ENCODE measurements at regions of chr6 and their contacts with region 1.

Region 1: GRCh38 chr6:15615802-15616201 is 47.0 kb downstream of the DTNBP1 start:
- DNase-seq: no peak
- H3K4me3 ChIP-seq: no peak overlapping the region
- H3K27ac ChIP-seq: no peak overlapping the region
- H3K4me1 ChIP-seq: peaks cover 0 to 19% (median 0%) of the 10 kb centered on the region in 3 donors
- H3K27me3 ChIP-seq: no peaks in the 10 kb centered on the region
- CTCF ChIP-seq: no peak
- POLR2A ChIP-seq: no peak

Region 2: GRCh38 chr6:15512126-15512525 is 103.7 kb before region 1 on chr6:
- intact Hi-C with region 1: loop called (anchors 10 kb)
- DNase-seq: no peak
- H3K4me3 ChIP-seq: no peak overlapping the region
- H3K27ac ChIP-seq: no peak overlapping the region
- H3K4me1 ChIP-seq: no peaks in the 10 kb centered on the region
- H3K27me3 ChIP-seq: no peaks in the 10 kb centered on the region
- CTCF ChIP-seq: no peak
- POLR2A ChIP-seq: no peak

Region 3: DNA sequence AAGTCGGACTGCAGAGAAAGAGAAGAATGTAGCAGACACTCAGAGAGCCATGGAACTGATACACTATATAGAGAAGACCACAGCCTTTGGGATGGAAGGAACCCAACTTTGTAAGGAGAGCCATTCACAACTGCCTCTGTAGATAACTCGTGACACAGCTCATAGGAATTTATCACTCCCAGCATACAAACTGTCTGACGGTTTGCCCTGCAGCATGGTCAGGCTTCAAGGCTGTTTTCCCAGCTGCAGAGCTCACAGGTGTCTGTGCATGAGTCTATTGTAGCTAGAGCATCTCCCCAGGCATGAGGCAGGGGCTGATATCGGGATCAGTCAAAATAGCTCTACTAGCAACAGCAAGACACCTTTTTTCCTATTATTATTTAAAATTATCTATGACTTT is 177.5 kb after region 1 on chr6:
- intact Hi-C with region 1: no loop called
- DNase-seq: no peak
- H3K4me3 ChIP-seq: no peak overlapping the region
- H3K27ac ChIP-seq: no peak overlapping the region
- H3K4me1 ChIP-seq: peaks cover 0 to 7% (median 0%) of the 10 kb centered on the region in 3 donors
- H3K27me3 ChIP-seq: no peaks in the 10 kb centered on the region
- CTCF ChIP-seq: no peak
- POLR2A ChIP-seq: no peak

Region 4: DNA sequence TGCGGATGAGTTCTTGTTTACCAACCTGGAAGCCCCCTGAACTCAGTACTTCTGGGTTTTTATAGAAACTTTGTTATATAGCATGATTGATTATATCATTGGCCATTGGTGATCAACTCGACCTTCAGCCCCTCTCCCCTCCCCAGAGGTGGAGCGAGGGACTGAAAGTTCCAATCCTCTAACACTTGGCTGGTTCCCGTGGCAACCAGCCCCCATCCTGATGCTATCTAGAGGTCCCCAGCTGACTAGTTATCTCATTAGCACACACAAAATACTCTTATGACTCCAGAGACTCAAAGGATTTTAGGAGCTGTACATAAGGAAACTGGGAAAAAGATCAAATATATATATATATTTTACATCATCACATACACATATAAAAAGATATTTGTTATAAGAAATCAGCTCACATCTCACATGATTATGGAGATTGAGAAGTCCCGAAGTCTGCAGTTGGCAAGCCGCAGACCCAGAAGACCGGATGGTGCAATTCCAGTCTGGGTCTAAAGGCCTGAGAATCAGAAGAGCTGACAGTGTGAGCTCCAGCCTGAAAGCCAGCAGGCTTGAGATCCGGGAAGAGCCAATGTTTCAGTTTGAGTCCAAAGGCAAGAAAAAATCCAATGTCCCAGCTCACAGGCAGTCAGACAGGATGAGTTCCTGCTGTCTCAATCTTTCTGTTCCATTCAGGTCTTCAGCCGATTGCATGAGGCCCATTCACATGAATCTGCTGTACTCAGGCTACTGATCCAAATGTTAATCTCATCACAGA is 226.3 kb after region 1 on chr6:
- intact Hi-C with region 1: no loop called
- DNase-seq: no peak
- H3K4me3 ChIP-seq: no peak overlapping the region
- H3K27ac ChIP-seq: peak overlapping the region in 1 of 4 donors; percentile 57
- H3K4me1 ChIP-seq: peaks cover 0 to 15% (median 0%) of the 10 kb centered on the region in 3 donors
- H3K27me3 ChIP-seq: no peaks in the 10 kb centered on the region
- CTCF ChIP-seq: no peak
- POLR2A ChIP-seq: no peak

Measured in esophagus squamous epithelium (tissue), 5 donors.